Natural killer cell (primary cell): ENCODE measurements at regions of chr3 and their contacts with region 1.

Region 1: DNA sequence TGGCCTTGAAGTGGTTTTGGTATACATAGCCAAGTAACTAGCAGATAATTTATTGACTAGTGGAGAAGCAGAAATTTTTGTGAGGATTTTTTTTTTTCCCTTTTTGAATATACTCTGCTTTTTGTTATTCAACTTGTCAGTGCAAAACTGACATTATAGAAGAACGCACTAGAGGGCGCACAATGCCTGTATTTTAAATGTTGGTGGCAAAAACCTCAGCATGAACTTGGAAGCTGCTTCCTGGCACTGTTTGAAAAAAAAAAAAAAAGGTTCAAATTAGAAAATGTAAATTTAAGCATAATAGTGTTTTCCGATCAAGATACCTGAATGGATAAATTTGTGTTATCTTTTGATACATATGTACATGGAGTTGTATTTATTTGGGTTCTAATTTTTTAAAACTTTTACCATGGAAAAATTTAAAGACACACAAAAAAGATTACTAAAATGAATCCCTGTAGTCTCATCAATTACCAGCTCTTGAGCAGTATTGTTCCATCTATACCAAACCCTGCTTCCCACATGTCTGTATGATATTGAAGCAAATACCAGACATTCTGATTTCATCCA is 56.0 kb downstream of the SLC25A26 start:
- DNase-seq: peak; percentile 27 to 86
- ATAC-seq: peak in 2 of 3 donors; percentile 60 to 86
- H3K4me3 ChIP-seq: no peak overlapping the region
- H3K4me3 Mint-ChIP-seq: no peak overlapping the region
- H3K27ac ChIP-seq: no peak overlapping the region
- H3K27ac Mint-ChIP-seq: peak overlapping the region; percentile 17 to 72
- H3K4me1 ChIP-seq: peaks cover 4% of the 10 kb centered on the region
- H3K4me1 Mint-ChIP-seq: peaks cover 33 to 38% of the 10 kb centered on the region in 2 donors
- H3K27me3 ChIP-seq: no peaks in the 10 kb centered on the region
- H3K27me3 Mint-ChIP-seq: no peaks in the 10 kb centered on the region
- CTCF ChIP-seq: peak; percentile 79

Region 2: DNA sequence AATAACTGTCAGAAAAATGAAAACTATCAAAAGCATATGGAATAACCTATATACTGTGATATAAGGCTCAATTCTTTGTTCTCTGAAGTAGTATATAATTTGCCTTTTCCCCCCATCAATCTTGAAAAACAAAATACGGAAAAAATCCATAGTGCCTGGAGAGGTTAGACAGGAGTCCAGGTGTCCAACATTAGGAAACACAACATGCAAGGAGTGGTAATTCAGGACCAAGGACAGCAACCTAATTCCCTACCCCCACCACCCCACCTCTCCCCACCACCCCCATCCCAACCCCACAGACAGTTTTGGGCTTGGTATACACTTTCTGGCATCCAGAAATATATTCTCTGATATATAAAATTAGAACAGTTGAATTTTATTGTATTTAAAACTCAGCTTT is 111.1 kb before region 1 on chr3:
- intact Hi-C with region 1: no loop called
- DNase-seq: no peak
- ATAC-seq: no peak
- H3K4me3 ChIP-seq: no peak overlapping the region
- H3K4me3 Mint-ChIP-seq: no peak overlapping the region
- H3K27ac ChIP-seq: no peak overlapping the region
- H3K27ac Mint-ChIP-seq: no peak overlapping the region
- H3K4me1 ChIP-seq: no peaks in the 10 kb centered on the region
- H3K4me1 Mint-ChIP-seq: no peaks in the 10 kb centered on the region
- H3K27me3 ChIP-seq: peaks cover 2% of the 10 kb centered on the region
- H3K27me3 Mint-ChIP-seq: peaks cover 0 to 7% of the 10 kb centered on the region in 2 donors
- CTCF ChIP-seq: no peak

Region 3: DNA sequence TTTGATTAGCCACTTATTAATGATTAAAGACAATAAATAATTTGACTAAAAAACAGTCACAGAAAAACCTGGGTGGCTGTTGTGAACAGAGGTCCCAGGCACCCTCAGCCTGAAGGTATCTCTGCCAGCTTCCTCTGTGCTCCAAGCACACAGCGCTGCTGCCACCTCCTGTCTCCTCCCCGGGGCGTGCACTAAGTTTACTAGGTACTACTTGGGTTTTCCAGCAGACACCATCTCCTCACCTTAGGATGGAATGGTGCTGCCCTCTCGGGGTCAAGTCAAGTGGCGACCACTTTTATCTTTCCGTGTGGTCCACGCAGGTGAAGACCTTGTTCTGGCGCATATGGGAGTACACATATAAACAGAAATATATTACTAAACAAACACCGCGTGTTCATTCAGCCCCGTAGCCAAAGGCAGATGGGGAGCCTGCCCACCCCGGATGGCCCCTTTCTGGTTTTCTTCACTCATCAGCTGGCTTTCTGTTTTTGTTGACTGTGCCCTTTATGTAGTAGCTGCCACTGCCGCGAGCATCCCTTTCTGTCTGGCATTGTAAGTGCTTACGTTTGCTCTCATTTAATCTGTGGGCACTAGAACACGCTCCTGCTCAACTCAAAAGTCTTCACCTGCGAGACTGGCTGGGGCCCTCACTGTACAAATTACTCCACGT is 96.0 kb after region 1 on chr3:
- intact Hi-C with region 1: loop called (anchors 1 kb)
- DNase-seq: peak; percentile 46 to 72
- ATAC-seq: peak; percentile 76 to 99 (median 96)
- H3K4me3 ChIP-seq: no peak overlapping the region
- H3K4me3 Mint-ChIP-seq: no peak overlapping the region
- H3K27ac ChIP-seq: no peak overlapping the region
- H3K27ac Mint-ChIP-seq: peak overlapping the region in 1 of 2 donors; percentile 19
- H3K4me1 ChIP-seq: peaks cover 24% of the 10 kb centered on the region
- H3K4me1 Mint-ChIP-seq: peaks cover 17 to 24% of the 10 kb centered on the region in 2 donors
- H3K27me3 ChIP-seq: no peaks in the 10 kb centered on the region
- H3K27me3 Mint-ChIP-seq: no peaks in the 10 kb centered on the region
- CTCF ChIP-seq: peak; percentile 62

Region 4: GRCh38 chr3:66816090-66816761 is 539.4 kb after region 1 on chr3:
- intact Hi-C with region 1: loop called (anchors 1 kb)
- DNase-seq: peak in 1 of 2 donors; percentile 68
- ATAC-seq: peak; percentile 72 to 77 (median 77)
- H3K4me3 ChIP-seq: no peak overlapping the region
- H3K4me3 Mint-ChIP-seq: no peak overlapping the region
- H3K27ac ChIP-seq: no peak overlapping the region
- H3K27ac Mint-ChIP-seq: no peak overlapping the region
- H3K4me1 ChIP-seq: no peaks in the 10 kb centered on the region
- H3K4me1 Mint-ChIP-seq: no peaks in the 10 kb centered on the region
- H3K27me3 ChIP-seq: peaks cover 3% of the 10 kb centered on the region
- H3K27me3 Mint-ChIP-seq: peaks cover 2 to 24% of the 10 kb centered on the region in 2 donors
- CTCF ChIP-seq: peak; percentile 69